Endothelial cell of umbilical vein (primary cell): ENCODE measurements at regions of chr6 and their contacts with region 1.

Region 1: GRCh38 chr6:29705389-29706231 is 17.6 kb upstream of the HLA-F start:
- DNase-seq: peak; percentile 39
- H3K4me3 ChIP-seq: no peak overlapping the region
- H3K27ac ChIP-seq: no peak overlapping the region
- H3K4me1 ChIP-seq: no peaks in the 10 kb centered on the region
- H3K27me3 ChIP-seq: peaks cover 7 to 8% of the 10 kb centered on the region in 2 experiments
- CTCF ChIP-seq: peak; percentile 36 to 40
- POLR2A ChIP-seq: no peak

Region 2: GRCh38 chr6:29146154-29146553 is 559.5 kb before region 1 on chr6:
- CTCF ChIA-PET with region 1: no interaction called
- POLR2A ChIA-PET with region 1: no interaction called
- dilution Hi-C with region 1: no loop called
- intact Hi-C with region 1: no loop called
- DNase-seq: no peak
- H3K4me3 ChIP-seq: no peak overlapping the region
- H3K27ac ChIP-seq: no peak overlapping the region
- H3K4me1 ChIP-seq: no peaks in the 10 kb centered on the region
- H3K27me3 ChIP-seq: no peaks in the 10 kb centered on the region
- CTCF ChIP-seq: no peak
- POLR2A ChIP-seq: no peak

Region 3: GRCh38 chr6:29792123-29793035 is 86.8 kb after region 1 on chr6:
- CTCF ChIA-PET with region 1: no interaction called
- POLR2A ChIA-PET with region 1: no interaction called
- dilution Hi-C with region 1: no loop called
- intact Hi-C with region 1: loop called (anchors 1 kb)
- DNase-seq: peak; percentile 9
- H3K4me3 ChIP-seq: peak overlapping the region in 2 of 3 experiments; percentile 7 to 51
- H3K27ac ChIP-seq: no peak overlapping the region
- H3K4me1 ChIP-seq: no peaks in the 10 kb centered on the region
- H3K27me3 ChIP-seq: peaks cover 31 to 62% of the 10 kb centered on the region in 2 experiments
- CTCF ChIP-seq: peak; percentile 44 to 73
- POLR2A ChIP-seq: no peak

Region 4: DNA sequence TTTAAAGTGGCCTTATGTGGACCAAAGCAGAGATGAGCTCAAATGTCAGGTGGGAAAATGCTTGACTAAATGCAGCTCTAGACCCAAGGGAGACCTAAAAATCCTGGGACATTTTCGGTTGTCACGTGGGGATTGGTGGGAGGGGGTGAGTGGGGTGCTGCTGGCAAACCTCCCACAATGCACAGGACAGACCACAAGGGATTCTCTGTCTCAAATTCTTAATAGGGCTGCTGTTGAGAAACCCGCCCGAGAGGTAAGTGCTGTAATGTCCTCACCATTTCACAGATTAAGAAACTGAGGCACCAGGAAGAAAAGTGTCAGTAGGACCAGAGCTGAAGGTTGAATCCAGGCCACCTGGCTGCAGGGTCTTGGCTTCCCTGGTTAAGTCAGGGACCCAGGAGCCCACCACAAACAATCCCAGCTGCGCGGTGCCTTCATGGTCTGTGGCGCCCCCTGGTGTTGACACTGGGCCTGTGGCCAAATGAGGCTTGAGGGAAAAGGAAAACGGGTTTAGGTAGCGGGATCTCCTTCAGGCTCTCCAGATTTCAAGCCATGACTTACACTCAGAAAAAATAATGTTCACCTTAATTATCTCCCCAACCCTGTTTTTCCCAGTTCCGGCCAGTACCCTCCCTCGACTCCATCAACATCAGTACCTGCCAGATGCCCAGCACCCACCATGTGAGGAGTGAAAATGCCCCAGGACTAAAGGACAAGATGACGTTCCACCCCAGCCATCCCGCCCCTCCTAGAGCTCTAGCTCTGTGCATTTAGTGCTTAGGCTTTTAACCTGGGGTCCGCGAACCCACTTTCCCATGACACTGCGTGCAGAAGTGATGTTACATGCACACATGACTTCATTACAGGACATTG is 129.2 kb after region 1 on chr6:
- CTCF ChIA-PET with region 1: interaction called, 14 read pairs
- POLR2A ChIA-PET with region 1: no interaction called
- dilution Hi-C with region 1: no loop called
- intact Hi-C with region 1: loop called (anchors 1 kb)
- DNase-seq: peak; percentile 8
- H3K4me3 ChIP-seq: no peak overlapping the region
- H3K27ac ChIP-seq: no peak overlapping the region
- H3K4me1 ChIP-seq: no peaks in the 10 kb centered on the region
- H3K27me3 ChIP-seq: peaks cover 24 to 29% of the 10 kb centered on the region in 2 experiments
- CTCF ChIP-seq: peak; percentile 69 to 82
- POLR2A ChIP-seq: no peak